Natural killer cell (primary cell): ENCODE measurements at regions of chr14 and their contacts with region 1.

Region 1: GRCh38 chr14:24690492-24690891 is 56.5 kb upstream of the GZMB start:
- DNase-seq: peak in 1 of 2 donors; percentile 55
- ATAC-seq: peak in 1 of 3 donors; percentile 17
- H3K4me3 ChIP-seq: no peak overlapping the region
- H3K4me3 Mint-ChIP-seq: peak overlapping the region; percentile 22
- H3K27ac ChIP-seq: no peak overlapping the region
- H3K27ac Mint-ChIP-seq: peak overlapping the region in 1 of 2 donors; percentile 78
- H3K4me1 ChIP-seq: peaks cover 57% of the 10 kb centered on the region
- H3K4me1 Mint-ChIP-seq: peaks cover 62% of the 10 kb centered on the region in 2 donors
- H3K27me3 ChIP-seq: no peaks in the 10 kb centered on the region
- H3K27me3 Mint-ChIP-seq: no peaks in the 10 kb centered on the region
- CTCF ChIP-seq: peak; percentile 40

Region 2: GRCh38 chr14:24673534-24674203 is 16.8 kb before region 1 on chr14:
- intact Hi-C with region 1: loop called (anchors 1 kb)
- DNase-seq: peak; percentile 52 to 88
- ATAC-seq: peak; percentile 65 to 81 (median 80)
- H3K4me3 ChIP-seq: peak overlapping the region; percentile 5
- H3K4me3 Mint-ChIP-seq: peak overlapping the region; percentile 95
- H3K27ac ChIP-seq: peak overlapping the region; percentile 80
- H3K27ac Mint-ChIP-seq: peak overlapping the region; percentile 99
- H3K4me1 ChIP-seq: peaks cover 36% of the 10 kb centered on the region
- H3K4me1 Mint-ChIP-seq: peaks cover 83 to 91% of the 10 kb centered on the region in 2 donors
- H3K27me3 ChIP-seq: no peaks in the 10 kb centered on the region
- H3K27me3 Mint-ChIP-seq: no peaks in the 10 kb centered on the region
- CTCF ChIP-seq: no peak